Aorta (tissue), 5 donors: ENCODE measurements at regions of chr5 and their contacts with region 1.

Region 1: DNA sequence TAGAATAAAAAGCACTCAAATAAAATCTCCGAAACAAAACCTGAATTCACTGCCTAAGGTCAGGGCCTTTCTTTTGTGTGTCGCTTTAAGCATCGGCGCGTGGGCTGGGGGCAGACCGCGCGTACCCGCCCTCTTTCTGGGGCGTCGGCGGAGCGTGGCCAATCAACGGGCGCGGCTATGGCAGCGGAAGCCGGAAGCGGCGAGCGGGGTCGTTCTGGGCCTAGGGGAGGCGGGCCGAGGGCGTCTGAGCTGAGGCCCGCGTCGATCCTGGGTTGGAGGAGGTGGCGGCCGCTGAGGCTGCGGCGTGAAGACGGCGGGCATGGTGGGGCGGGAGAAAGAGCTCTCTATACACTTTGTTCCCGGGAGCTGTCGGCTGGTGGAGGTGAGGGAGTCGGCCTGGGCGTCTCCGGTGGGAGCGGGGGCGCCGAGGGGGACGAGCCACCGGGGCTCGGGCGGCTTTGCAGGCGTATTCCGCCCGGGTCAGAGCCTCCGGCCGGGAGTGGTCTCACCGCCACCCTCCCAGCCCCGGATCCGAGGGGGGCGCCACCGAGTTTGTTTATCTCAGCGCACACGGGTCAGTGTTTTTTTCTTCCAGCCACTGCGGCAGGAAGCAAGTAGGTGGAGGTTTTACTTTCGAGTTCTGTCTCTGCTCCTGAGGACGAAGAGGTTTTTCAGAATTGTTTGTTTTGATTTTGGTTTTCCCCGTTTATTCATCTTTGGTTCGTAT is at the start of gene MAT2B:
- DNase-seq: peak; percentile 98 to 99
- ATAC-seq: peak; percentile 97
- H3K4me3 ChIP-seq: peak within 1 kb of the TSS; percentile 62 to 83
- H3K27ac ChIP-seq: peak within 1 kb of the TSS; percentile 96 to 99
- H3K4me1 ChIP-seq: peaks cover 0 to 5% of the 10 kb centered on the region in 2 donors
- H3K27me3 ChIP-seq: no peaks in the 10 kb centered on the region
- total RNA-seq, gene MAT2B: 39.3 to 46.6 TPM

Region 2: DNA sequence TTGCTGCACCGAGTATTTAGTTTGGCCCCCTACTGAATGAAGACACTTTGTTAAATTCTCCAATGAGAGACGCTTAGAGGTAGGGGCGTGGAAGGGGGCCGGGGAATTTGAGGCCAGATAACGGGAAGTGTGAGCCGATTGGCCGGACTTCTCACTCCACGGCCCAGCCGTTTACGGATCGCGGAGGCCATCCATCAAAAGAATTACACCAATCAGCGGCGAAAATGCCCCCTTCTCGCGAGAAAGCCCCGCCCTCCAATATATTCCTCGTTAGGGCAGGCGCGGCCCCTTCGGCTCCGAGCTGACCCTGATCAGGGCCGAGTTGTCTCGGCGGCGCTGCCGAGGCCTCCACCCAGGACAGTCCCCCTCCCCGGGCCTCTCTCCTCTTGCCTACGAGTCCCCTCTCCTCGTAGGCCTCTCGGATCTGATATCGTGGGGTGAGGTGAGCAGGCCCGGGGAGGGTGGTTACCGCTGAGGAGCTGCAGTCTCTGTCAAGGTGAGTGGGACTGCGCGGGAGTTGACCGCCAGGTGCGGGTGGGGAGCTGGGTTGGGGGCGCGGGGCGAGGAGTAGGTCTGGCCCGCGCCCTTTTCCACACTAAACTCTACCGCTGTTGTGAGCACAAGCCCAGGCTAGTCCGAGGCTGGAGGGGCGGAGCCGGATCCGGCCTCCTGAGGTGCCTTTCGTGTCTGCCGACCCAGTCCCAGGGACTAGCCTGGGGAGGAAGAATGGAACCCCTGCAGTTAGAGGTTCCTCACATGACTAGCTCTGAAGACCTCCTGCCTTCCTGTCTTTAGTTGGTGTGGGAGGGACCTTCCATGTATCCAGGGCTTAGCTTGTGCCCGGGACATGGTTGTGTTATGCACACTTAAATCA is 68.0 kb before region 1 on chr5 and contains the start of gene CCNG1:
- intact Hi-C with region 1: loop called in 1 of 2 experiments (anchors 2 kb)
- DNase-seq: peak; percentile 96
- ATAC-seq: peak; percentile 98
- H3K4me3 ChIP-seq: peak within 1 kb of the TSS; percentile 62 to 93
- H3K27ac ChIP-seq: peak within 1 kb of the TSS; percentile 44 to 53
- H3K4me1 ChIP-seq: peaks cover 6% of the 10 kb centered on the region in 2 donors
- H3K27me3 ChIP-seq: no peaks in the 10 kb centered on the region
- total RNA-seq, gene CCNG1: 101 to 108 TPM

Region 3: GRCh38 chr5:163459922-163460766 is 45.4 kb before region 1 on chr5 and contains the starts of genes HMMR and NUDCD2:
- intact Hi-C with region 1: loop called (anchors 1 to 5 kb)
- DNase-seq: peak; percentile 98 to 100
- ATAC-seq: peak; percentile 99
- H3K4me3 ChIP-seq: peak within 1 kb of the TSS; percentile 45 to 89
- H3K27ac ChIP-seq: peak within 1 kb of the TSS; percentile 8 to 97
- H3K4me1 ChIP-seq: peaks cover 0 to 2% of the 10 kb centered on the region in 2 donors
- H3K27me3 ChIP-seq: no peaks in the 10 kb centered on the region
- total RNA-seq, gene HMMR: 2.2 TPM in 1 of 2 donors, not detected in the other
- total RNA-seq, gene NUDCD2: 14.5 to 20.7 TPM

Region 4: GRCh38 chr5:164097747-164098146 is 592.2 kb after region 1 on chr5:
- intact Hi-C with region 1: no loop called
- DNase-seq: no peak
- ATAC-seq: no peak
- H3K4me3 ChIP-seq: no peak overlapping the region
- H3K27ac ChIP-seq: no peak overlapping the region
- H3K4me1 ChIP-seq: no peaks in the 10 kb centered on the region
- H3K27me3 ChIP-seq: no peaks in the 10 kb centered on the region